ENCODE measurements at regions of chr15 and their contacts with region 1.

Region 1: DNA sequence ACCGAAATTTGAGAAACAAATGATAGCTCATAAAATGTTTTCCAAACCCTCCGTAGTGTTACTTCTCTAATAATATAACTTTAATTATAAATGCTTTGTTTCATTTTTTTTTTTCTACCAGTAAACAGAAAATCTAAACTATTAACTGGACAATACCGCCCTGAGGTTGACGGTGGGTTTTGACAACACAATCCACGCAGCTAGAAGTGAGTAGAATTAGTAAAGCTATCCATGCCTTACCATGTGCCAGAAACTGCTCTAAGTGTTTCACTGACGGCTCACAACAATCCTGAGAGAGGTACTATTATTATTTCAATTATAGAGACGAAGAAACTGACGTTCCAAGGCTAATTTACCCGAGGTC is 410 bp downstream of the NDUFAF1 start:
- DNase-seq: no peak
- ATAC-seq: no peak; the same call in 1 of the 2 replicates
- H3K4me3 ChIP-seq: peak overlapping the region; percentile 79 to 86
- H3K27ac ChIP-seq: peak overlapping the region; percentile 92
- H3K4me1 ChIP-seq: 0 out of 2 replicates have a peak, but pooled peaks cover 4% of the 10 kb centered on the region
- H3K27me3 ChIP-seq: no peaks in the 10 kb centered on the region
- CTCF ChIP-seq: no peak

Region 2: GRCh38 chr15:39472621-39473297 is 1929.1 kb before region 1 on chr15:
- CTCF ChIA-PET with region 1: no interaction called
- POLR2A ChIA-PET with region 1: no interaction called
- in situ Hi-C with region 1: no loop called
- intact Hi-C with region 1: no loop called
- DNase-seq: no peak
- ATAC-seq: no peak
- H3K4me3 ChIP-seq: no peak overlapping the region
- H3K27ac ChIP-seq: no peak overlapping the region
- H3K4me1 ChIP-seq: no peaks in the 10 kb centered on the region
- H3K27me3 ChIP-seq: no peaks in the 10 kb centered on the region
- CTCF ChIP-seq: no peak

Region 3: GRCh38 chr15:41043276-41043951 is 358.5 kb before region 1 on chr15:
- CTCF ChIA-PET with region 1: no interaction called
- POLR2A ChIA-PET with region 1: no interaction called
- in situ Hi-C with region 1: no loop called
- intact Hi-C with region 1: no loop called
- DNase-seq: no peak
- ATAC-seq: no peak
- H3K4me3 ChIP-seq: no peak overlapping the region
- H3K27ac ChIP-seq: no peak overlapping the region
- H3K4me1 ChIP-seq: no peaks in the 10 kb centered on the region
- H3K27me3 ChIP-seq: no peaks in the 10 kb centered on the region
- CTCF ChIP-seq: no peak

Region 4: GRCh38 chr15:41387646-41388045 is 14.2 kb before region 1 on chr15:
- CTCF ChIA-PET with region 1: no interaction called
- POLR2A ChIA-PET with region 1: interaction called, 15 read pairs
- in situ Hi-C with region 1: no loop called
- intact Hi-C with region 1: no loop called
- DNase-seq: no peak
- ATAC-seq: no peak
- H3K4me3 ChIP-seq: no peak overlapping the region
- H3K27ac ChIP-seq: no peak overlapping the region
- H3K4me1 ChIP-seq: no peaks in the 10 kb centered on the region
- H3K27me3 ChIP-seq: no peaks in the 10 kb centered on the region
- CTCF ChIP-seq: no peak

Region 5: GRCh38 chr15:41544650-41545015 is 142.7 kb after region 1 on chr15:
- CTCF ChIA-PET with region 1: no interaction called
- POLR2A ChIA-PET with region 1: no interaction called
- in situ Hi-C with region 1: no loop called
- intact Hi-C with region 1: no loop called
- DNase-seq: no peak
- ATAC-seq: peak; percentile 32; the same call in 1 of the 2 replicates
- H3K4me3 ChIP-seq: peak overlapping the region; percentile 92 to 99
- H3K27ac ChIP-seq: peak overlapping the region; percentile 93
- H3K4me1 ChIP-seq: peaks cover 12% of the 10 kb centered on the region
- H3K27me3 ChIP-seq: no peaks in the 10 kb centered on the region
- CTCF ChIP-seq: no peak

Measured in Panc1 (cell line).